Mammary epithelial cell (primary cell): ENCODE measurements at regions of chr14 and their contacts with region 1.

Region 1: DNA sequence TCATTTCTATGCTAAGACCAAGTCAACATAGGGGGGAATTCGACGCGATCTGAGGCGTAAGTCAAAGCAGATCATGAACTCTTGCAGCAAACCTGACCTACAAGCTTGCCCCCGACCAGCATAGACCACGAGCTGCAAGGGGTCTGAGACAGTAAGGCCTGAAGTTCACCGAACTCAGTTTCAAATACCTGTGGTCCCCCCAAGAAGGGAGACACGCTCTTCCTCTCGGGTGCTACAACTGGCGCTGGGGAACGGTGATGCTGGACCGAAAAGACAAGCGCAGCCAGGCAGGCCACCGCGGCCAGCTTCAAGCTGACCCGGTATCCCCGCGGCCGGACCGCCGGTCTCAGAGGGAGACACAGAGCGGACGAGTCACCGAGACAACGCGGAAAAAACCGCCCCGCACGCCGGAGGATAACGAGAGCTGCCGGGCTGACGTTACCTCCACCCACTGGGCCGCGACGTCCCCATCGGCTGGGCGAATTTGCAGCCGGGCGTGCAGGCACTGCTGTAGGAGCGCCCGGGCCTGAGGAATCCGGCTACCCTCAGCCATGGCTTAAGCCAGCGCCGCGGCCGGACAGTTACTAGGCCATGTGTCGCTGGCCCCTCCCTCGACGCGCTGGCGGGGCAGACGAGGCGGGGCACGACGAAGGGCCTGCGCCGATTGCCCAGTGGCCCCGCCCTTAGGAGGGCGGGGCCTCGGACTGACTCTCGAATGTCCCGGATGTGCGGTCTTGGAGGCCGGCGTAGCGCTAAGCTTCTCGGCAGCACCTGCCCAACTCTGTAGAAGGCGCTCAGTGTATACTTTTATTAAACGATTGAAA is at the start of gene DTD2:
- DNase-seq: peak; percentile 93
- H3K4me3 ChIP-seq: peak within 1 kb of the TSS; percentile 60 to 77 (median 73)
- H3K27ac ChIP-seq: peak within 1 kb of the TSS; percentile 81
- H3K4me1 ChIP-seq: peaks cover 9% of the 10 kb centered on the region
- H3K27me3 ChIP-seq: no peaks in the 10 kb centered on the region
- CTCF ChIP-seq: no peak
- total RNA-seq, gene DTD2: 21.4 to 59.5 TPM

Region 2: DNA sequence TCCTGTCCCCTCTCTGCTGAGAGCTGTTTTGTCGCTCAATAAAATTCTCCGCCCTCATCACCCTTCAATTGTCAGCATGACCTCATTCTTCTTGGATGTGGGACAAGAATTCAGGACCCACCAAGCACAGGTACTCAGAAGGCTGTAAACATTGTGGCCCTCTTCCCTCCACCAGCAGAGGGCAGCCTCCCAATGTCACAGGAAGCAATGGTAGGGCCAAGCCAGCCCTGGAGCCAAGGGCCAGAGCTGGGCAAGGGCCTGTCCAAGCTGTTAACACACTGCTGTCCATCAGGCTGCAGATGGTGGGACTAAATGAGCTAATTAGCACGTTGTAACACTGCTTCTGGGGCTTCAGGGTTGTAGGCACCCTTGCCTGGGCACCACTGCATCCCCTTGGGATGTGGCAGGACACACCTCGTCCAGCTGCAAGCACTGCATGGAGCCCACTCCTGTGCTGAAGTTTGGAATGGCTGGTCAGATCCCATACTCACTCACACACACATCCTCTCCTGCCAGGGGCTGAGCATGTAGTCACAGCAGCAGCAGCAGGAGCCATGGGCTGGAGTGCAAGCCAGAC is 186.8 kb before region 1 on chr14:
- CTCF ChIA-PET with region 1: no interaction called
- dilution Hi-C with region 1: no loop called
- in situ Hi-C with region 1: no loop called
- intact Hi-C with region 1: loop called (anchors 10 kb)
- DNase-seq: no peak
- H3K4me3 ChIP-seq: no peak overlapping the region
- H3K27ac ChIP-seq: no peak overlapping the region
- H3K4me1 ChIP-seq: peaks cover 18% of the 10 kb centered on the region
- H3K27me3 ChIP-seq: no peaks in the 10 kb centered on the region
- CTCF ChIP-seq: peak; percentile 45 to 66

Region 3: GRCh38 chr14:31400031-31400638 is 56.9 kb before region 1 on chr14:
- CTCF ChIA-PET with region 1: no interaction called
- dilution Hi-C with region 1: no loop called
- in situ Hi-C with region 1: no loop called
- intact Hi-C with region 1: no loop called
- DNase-seq: no peak
- H3K4me3 ChIP-seq: no peak overlapping the region
- H3K27ac ChIP-seq: no peak overlapping the region
- H3K4me1 ChIP-seq: no peaks in the 10 kb centered on the region
- H3K27me3 ChIP-seq: no peaks in the 10 kb centered on the region
- CTCF ChIP-seq: no peak

Region 4: GRCh38 chr14:31561155-31561846 is 104.2 kb after region 1 on chr14 and contains the start of gene NUBPL:
- CTCF ChIA-PET with region 1: no interaction called
- dilution Hi-C with region 1: no loop called
- in situ Hi-C with region 1: no loop called
- intact Hi-C with region 1: loop called (anchors 5 kb)
- DNase-seq: peak; percentile 87
- H3K4me3 ChIP-seq: peak within 1 kb of the TSS; percentile 77 to 94 (median 84)
- H3K27ac ChIP-seq: peak within 1 kb of the TSS; percentile 90
- H3K4me1 ChIP-seq: peaks cover 3% of the 10 kb centered on the region
- H3K27me3 ChIP-seq: no peaks in the 10 kb centered on the region
- CTCF ChIP-seq: no peak
- total RNA-seq, gene NUBPL: 12.3 to 16.6 TPM

Region 5: DNA sequence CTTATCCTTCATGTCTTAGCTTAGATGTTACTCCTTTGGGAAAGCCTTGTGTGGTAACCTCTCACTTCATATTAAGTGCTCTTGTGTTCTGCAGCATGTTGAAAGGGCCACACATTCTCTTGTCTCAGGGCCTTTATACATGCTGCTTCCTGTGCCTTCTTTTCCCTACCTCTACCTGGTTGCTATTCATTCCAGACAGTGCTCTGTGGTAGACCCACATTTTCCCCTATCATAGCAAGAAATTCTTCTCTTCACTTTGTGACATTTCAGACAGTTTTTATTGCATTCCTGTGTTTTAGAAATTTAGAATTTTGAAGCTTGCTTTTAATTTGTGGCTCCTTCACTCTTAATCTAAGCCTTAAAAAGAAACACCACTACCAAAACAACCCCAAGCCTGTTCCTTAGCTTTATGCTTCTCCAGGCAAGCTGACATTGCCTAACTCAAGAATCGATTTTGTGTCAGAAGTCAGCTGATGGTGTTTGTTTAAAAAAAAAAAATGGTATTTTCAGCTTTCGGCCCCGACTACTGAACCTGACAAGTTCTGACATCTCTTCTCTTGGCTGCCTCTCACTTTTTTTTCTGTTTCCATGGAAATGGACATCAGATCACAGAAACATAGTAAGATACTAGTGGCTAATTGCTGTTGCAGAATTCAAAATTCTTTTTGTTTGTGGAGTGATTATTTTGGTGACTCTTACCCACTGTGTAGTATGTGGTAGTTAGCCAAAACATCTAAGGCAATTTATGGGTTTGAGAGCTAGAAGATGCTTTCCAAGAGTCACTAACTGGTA is 260.4 kb after region 1 on chr14:
- CTCF ChIA-PET with region 1: no interaction called
- dilution Hi-C with region 1: no loop called
- in situ Hi-C with region 1: no loop called
- intact Hi-C with region 1: no loop called
- DNase-seq: peak; percentile 32
- H3K4me3 ChIP-seq: no peak overlapping the region
- H3K27ac ChIP-seq: no peak overlapping the region
- H3K4me1 ChIP-seq: no peaks in the 10 kb centered on the region
- H3K27me3 ChIP-seq: no peaks in the 10 kb centered on the region
- CTCF ChIP-seq: no peak